ENCODE measurements at regions of chr17 and their contacts with region 1.

Region 1: GRCh38 chr17:76515274-76515949 is 14.2 kb upstream of the RHBDF2 start:
- DNase-seq: peak; percentile 80 to 97
- ATAC-seq: peak; percentile 79 to 89 (median 81)
- H3K4me3 ChIP-seq: peak overlapping the region; percentile 31
- H3K4me3 Mint-ChIP-seq: peak overlapping the region; percentile 77
- H3K27ac ChIP-seq: peak overlapping the region; percentile 86
- H3K27ac Mint-ChIP-seq: peak overlapping the region; percentile 92 to 96
- H3K4me1 ChIP-seq: peaks cover 82% of the 10 kb centered on the region
- H3K4me1 Mint-ChIP-seq: peaks cover 43 to 60% of the 10 kb centered on the region in 2 donors
- H3K27me3 ChIP-seq: no peaks in the 10 kb centered on the region
- H3K27me3 Mint-ChIP-seq: no peaks in the 10 kb centered on the region
- CTCF ChIP-seq: no peak

Region 2: GRCh38 chr17:76492989-76493501 is 22.4 kb before region 1 on chr17:
- intact Hi-C with region 1: loop called (anchors 2 kb)
- DNase-seq: peak; percentile 59 to 69
- ATAC-seq: peak; percentile 61 to 75 (median 65)
- H3K4me3 ChIP-seq: peak overlapping the region; percentile 25
- H3K4me3 Mint-ChIP-seq: peak overlapping the region; percentile 89
- H3K27ac ChIP-seq: peak overlapping the region; percentile 90
- H3K27ac Mint-ChIP-seq: peak overlapping the region; percentile 96 to 97
- H3K4me1 ChIP-seq: peaks cover 95% of the 10 kb centered on the region
- H3K4me1 Mint-ChIP-seq: peaks cover 64 to 86% of the 10 kb centered on the region in 2 donors
- H3K27me3 ChIP-seq: no peaks in the 10 kb centered on the region
- H3K27me3 Mint-ChIP-seq: no peaks in the 10 kb centered on the region
- CTCF ChIP-seq: no peak

Region 3: DNA sequence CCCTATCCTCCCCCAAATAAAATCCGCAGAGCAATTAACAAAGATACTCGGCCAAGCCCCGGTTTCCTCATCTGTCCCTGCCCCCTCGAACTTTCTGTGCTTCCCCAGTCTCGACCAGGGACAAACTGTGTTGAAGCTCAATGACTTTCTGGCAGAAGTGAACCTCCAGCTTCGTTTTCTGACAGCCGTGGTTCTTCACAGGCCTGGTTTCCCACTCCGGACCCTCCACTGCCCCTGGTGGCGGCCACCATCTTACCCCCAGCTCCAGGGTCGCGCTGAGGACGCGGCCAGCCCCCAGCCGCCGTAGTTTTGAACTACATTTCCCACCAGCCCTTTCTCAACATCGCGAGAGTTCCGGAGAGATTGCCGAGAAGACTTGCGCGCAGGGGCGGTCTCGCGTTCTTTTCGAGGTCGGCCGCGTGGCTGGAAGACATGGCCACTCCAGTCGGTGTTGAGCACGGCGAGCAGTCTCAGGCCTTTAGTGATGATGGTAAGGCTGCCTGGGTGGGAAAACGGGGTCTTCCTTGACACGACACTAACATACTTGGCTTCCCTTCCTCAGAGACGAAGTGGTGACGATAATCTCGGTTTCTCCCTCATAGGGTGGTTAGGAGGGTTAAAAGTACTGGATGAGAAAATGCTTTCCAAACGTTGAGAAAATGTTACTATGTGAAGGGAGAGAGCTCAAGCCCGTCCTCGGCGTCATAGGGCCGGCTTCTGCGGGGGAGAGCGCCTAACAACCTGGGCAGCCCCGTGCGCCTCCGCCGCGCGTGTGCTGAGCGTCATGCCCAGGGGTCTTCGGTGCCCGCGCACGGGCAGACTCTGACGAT is 42.2 kb after region 1 on chr17:
- intact Hi-C with region 1: loop called (anchors 1 kb)
- DNase-seq: peak; percentile 86 to 97
- ATAC-seq: peak; percentile 83 to 91 (median 85)
- H3K4me3 ChIP-seq: peak overlapping the region; percentile 72
- H3K4me3 Mint-ChIP-seq: peak overlapping the region; percentile 100
- H3K27ac ChIP-seq: peak overlapping the region; percentile 94
- H3K27ac Mint-ChIP-seq: peak overlapping the region; percentile 100
- H3K4me1 ChIP-seq: peaks cover 34% of the 10 kb centered on the region
- H3K4me1 Mint-ChIP-seq: peaks cover 32 to 34% of the 10 kb centered on the region in 2 donors
- H3K27me3 ChIP-seq: no peaks in the 10 kb centered on the region
- H3K27me3 Mint-ChIP-seq: no peaks in the 10 kb centered on the region
- CTCF ChIP-seq: no peak

Region 4: DNA sequence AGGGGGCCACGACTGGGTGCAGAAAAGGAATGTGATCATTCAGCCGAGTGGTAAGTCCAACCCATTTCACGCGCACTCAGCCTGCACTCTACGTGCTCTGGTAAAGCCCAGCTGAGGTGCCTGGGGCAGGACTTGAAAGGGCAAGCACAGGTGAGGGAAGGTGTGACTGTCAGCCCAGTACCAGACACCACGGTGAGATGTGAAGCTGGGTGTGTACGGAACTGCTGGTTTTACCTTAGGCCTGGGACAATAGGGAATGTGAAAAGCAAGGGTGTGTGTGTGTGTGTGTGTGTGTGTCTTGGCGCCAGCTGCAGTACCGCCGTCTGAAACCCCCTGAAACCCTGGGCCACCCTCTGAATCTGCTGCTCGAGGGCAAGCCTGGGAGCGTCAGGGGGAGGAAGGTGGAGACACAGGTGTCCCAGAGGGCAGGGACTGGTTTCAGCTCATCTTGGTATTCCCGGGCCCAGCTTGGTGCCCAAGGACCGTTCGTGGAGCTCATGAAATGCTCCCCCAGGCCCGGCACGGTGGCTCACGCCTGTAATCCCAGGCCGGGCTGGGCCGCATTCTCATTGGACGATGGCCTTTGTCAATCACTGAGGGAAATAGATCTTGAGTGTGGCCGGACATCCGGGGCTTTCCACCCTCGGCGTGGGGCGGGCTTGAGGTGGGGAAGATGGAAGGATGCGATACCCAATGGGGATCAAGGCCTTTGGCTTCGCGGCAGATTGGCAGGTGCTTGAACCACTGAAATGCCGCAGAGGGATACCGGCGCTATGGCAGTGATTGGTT is 155.9 kb after region 1 on chr17:
- intact Hi-C with region 1: loop called (anchors 5 kb)
- DNase-seq: peak; percentile 97 to 100
- ATAC-seq: peak; percentile 98 to 100 (median 99)
- H3K4me3 ChIP-seq: peak overlapping the region; percentile 81
- H3K4me3 Mint-ChIP-seq: peak overlapping the region; percentile 87
- H3K27ac ChIP-seq: peak overlapping the region; percentile 89
- H3K27ac Mint-ChIP-seq: peak overlapping the region; percentile 91 to 97
- H3K4me1 ChIP-seq: peaks cover 17% of the 10 kb centered on the region
- H3K4me1 Mint-ChIP-seq: peaks cover 23 to 26% of the 10 kb centered on the region in 2 donors
- H3K27me3 ChIP-seq: no peaks in the 10 kb centered on the region
- H3K27me3 Mint-ChIP-seq: no peaks in the 10 kb centered on the region
- CTCF ChIP-seq: no peak

Region 5: DNA sequence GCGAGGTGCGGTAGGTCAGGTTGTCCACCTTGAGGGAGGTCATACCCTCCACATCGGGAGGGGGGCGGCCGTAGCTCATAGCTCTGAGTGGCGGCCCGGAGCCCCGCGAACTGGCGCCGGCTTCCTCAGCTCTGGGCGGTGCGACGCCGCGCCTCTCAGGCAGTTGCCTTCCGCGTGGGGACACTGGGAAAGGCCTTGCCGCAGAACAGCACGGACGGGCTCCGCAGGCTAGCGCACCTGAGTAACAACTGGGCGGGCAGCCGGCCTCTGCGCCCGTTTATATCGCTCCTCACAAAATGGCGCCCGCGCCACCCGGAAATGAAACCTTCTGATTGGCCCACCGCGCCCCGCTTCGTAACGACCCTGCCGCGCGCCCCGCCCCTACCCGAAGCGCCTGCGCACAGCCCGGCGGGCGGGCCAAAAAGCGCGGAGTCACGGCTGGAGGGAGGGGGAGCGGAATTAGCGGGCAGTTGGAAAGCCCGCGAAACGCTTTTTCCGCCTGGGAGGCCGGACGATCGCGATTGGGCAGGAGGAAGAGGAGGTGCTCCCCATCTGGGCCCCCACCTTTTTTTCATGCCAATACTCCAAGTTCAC is 221.8 kb after region 1 on chr17 and contains the start of gene SRSF2:
- intact Hi-C with region 1: loop called (anchors 1 kb)
- DNase-seq: peak; percentile 98 to 100
- ATAC-seq: peak; percentile 73 to 89 (median 75)
- H3K4me3 ChIP-seq: peak within 1 kb of the TSS; percentile 81
- H3K4me3 Mint-ChIP-seq: peak within 1 kb of the TSS; percentile 96
- H3K27ac ChIP-seq: peak within 1 kb of the TSS; percentile 98
- H3K27ac Mint-ChIP-seq: peak within 1 kb of the TSS; percentile 99 to 100
- H3K4me1 ChIP-seq: peaks cover 26% of the 10 kb centered on the region
- H3K4me1 Mint-ChIP-seq: peaks cover 53 to 59% of the 10 kb centered on the region in 2 donors
- H3K27me3 ChIP-seq: no peaks in the 10 kb centered on the region
- H3K27me3 Mint-ChIP-seq: no peaks in the 10 kb centered on the region
- CTCF ChIP-seq: no peak
- total RNA-seq, gene SRSF2: 402 to 548 (median 503) TPM

Measured in natural killer cell (primary cell).